ENCODE measurements at regions of chrX and their contacts with region 1.

Region 1: DNA sequence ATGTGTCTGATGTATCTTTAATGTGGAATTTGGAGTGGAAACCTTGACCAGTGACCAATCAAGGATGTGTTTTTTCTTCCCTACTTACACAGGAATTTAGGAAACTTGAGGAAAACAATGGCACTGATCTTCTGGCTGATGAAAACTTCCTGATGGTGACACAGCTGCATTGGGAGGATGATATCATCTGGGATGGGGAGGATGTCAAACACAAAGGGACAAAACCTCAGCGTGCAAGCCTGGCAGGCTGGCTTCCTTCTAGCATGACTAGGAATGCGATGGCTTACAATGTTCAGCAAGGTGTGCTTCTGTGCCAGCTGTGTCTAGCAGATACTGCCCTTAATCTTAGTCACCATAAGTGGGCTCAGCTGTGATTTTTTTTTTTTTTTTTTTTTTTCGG is 12.6 kb downstream of the TAF1 start:
- DNase-seq: no peak
- ATAC-seq: no peak

Region 2: DNA sequence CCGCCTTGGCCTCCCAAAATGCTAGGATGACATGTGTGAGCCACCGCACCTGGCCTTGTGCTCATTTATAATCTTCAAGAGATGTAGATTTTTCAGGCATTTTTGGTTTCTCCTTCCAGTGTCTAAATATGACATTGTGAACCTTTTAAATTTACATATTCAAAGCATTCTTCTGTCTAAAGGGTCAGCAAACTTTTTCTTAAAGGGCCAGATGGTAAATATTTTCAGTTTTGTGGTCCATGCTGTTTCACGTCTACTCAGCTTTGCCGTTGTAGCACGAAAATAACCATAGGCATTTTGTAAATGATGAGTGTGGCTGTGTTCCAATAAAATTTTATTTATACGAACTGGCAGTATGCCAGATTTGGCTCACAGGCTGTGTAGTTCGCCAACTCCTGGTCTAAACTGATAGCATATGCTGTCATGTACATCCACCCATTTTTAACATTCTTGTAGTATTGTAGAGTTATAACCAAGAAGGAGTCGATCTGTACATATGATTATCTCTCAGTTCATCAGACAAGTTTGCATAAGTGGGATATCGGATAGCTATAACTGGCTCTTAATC is 186.8 kb after region 1 on chrX:
- intact Hi-C with region 1: loop called in 1 of 2 experiments (anchors 10 kb)
- DNase-seq: no peak
- ATAC-seq: no peak

Measured in left cardiac atrium (tissue), 4 donors.